ENCODE measurements at regions of chr3 and their contacts with region 1.

Region 1: DNA sequence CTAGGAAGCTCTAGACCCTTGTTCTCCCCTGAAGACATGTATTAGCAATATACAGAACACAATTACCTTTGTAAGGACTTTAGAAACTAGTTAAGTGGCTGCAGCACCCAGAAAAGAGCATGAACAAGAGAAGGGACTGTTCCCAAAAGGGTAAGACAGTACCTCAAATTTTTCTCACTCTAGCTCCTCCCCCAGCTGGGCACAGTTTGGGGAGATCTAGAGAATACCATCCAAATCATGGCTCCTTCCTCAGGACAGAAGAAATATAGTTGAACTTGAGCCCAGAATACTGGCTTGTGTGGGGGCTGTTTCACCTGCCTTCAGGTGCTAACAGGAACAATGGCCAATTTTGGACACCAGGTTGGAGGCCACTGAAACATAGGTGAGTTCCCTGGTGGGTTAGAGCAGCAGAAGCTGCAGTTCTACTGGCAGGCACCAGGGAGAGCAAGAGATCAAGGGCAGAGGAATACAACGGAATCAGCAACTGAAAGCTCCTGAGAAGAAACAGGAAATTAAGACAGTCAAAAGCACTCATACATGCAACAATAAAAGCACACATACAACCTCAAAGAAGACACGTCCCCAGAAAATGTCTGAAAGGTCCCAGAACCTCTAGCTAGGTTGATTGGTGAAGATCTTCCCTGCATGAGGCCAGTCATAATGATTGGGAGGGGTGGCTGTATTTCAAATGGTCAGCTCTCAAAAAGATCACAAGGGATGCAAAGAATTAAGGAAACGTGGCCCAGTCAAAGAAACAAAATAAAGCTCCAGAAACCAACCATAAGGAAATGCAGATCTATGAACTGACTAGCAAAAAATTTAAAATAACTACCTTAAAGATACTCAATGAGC is 104.9 kb upstream of the ASB14 start:
- DNase-seq: peak; percentile 51
- H3K4me3 ChIP-seq: no peak overlapping the region
- H3K27ac ChIP-seq: no peak overlapping the region
- H3K4me1 ChIP-seq: no peaks in the 10 kb centered on the region
- H3K27me3 ChIP-seq: no peaks in the 10 kb centered on the region
- CTCF ChIP-seq: peak; percentile 93 to 97

Region 2: GRCh38 chr3:57287205-57287604 is 110.2 kb before region 1 on chr3:
- CTCF ChIA-PET with region 1: no interaction called
- dilution Hi-C with region 1: loop called (anchors 5 kb)
- in situ Hi-C with region 1: no loop called
- intact Hi-C with region 1: no loop called
- DNase-seq: no peak
- H3K4me3 ChIP-seq: no peak overlapping the region
- H3K27ac ChIP-seq: no peak overlapping the region
- H3K4me1 ChIP-seq: no peaks in the 10 kb centered on the region
- H3K27me3 ChIP-seq: no peaks in the 10 kb centered on the region
- CTCF ChIP-seq: no peak

Region 3: GRCh38 chr3:57434041-57434440 is 36.6 kb after region 1 on chr3:
- CTCF ChIA-PET with region 1: no interaction called
- dilution Hi-C with region 1: no loop called
- in situ Hi-C with region 1: no loop called
- intact Hi-C with region 1: loop called (anchors 1 kb)
- DNase-seq: peak; percentile 30
- H3K4me3 ChIP-seq: no peak overlapping the region
- H3K27ac ChIP-seq: no peak overlapping the region
- H3K4me1 ChIP-seq: no peaks in the 10 kb centered on the region
- H3K27me3 ChIP-seq: no peaks in the 10 kb centered on the region
- CTCF ChIP-seq: peak; percentile 61 to 71

Region 4: GRCh38 chr3:57555738-57556458 is 158.5 kb after region 1 on chr3 and contains the start of gene PDE12:
- CTCF ChIA-PET with region 1: no interaction called
- dilution Hi-C with region 1: no loop called
- in situ Hi-C with region 1: no loop called
- intact Hi-C with region 1: loop called (anchors 5 kb)
- DNase-seq: peak; percentile 92
- H3K4me3 ChIP-seq: peak within 1 kb of the TSS; percentile 61 to 81 (median 76)
- H3K27ac ChIP-seq: peak within 1 kb of the TSS; percentile 88
- H3K4me1 ChIP-seq: peaks cover 20% of the 10 kb centered on the region
- H3K27me3 ChIP-seq: no peaks in the 10 kb centered on the region
- CTCF ChIP-seq: peak in 1 of 2 donors; percentile 10
- total RNA-seq, gene PDE12: 22.4 to 26.7 TPM

Region 5: GRCh38 chr3:57832900-57833313 is 435.5 kb after region 1 on chr3:
- CTCF ChIA-PET with region 1: no interaction called
- dilution Hi-C with region 1: no loop called
- in situ Hi-C with region 1: no loop called
- intact Hi-C with region 1: loop called (anchors 10 kb)
- DNase-seq: no peak
- H3K4me3 ChIP-seq: no peak overlapping the region
- H3K27ac ChIP-seq: no peak overlapping the region
- H3K4me1 ChIP-seq: peaks cover 5% of the 10 kb centered on the region
- H3K27me3 ChIP-seq: no peaks in the 10 kb centered on the region
- CTCF ChIP-seq: no peak

Measured in mammary epithelial cell (primary cell).